ENCODE measurements at regions of chr3 and their contacts with region 1.

Region 1: GRCh38 chr3:18761530-18761929 is 336.4 kb upstream of the SATB1 start:
- DNase-seq: no peak
- H3K4me3 ChIP-seq: no peak overlapping the region
- H3K27ac ChIP-seq: no peak overlapping the region
- H3K4me1 ChIP-seq: peaks cover 7 to 13% of the 10 kb centered on the region in 2 donors
- H3K27me3 ChIP-seq: no peaks in the 10 kb centered on the region
- CTCF ChIP-seq: no peak
- POLR2A ChIP-seq: no peak

Region 2: DNA sequence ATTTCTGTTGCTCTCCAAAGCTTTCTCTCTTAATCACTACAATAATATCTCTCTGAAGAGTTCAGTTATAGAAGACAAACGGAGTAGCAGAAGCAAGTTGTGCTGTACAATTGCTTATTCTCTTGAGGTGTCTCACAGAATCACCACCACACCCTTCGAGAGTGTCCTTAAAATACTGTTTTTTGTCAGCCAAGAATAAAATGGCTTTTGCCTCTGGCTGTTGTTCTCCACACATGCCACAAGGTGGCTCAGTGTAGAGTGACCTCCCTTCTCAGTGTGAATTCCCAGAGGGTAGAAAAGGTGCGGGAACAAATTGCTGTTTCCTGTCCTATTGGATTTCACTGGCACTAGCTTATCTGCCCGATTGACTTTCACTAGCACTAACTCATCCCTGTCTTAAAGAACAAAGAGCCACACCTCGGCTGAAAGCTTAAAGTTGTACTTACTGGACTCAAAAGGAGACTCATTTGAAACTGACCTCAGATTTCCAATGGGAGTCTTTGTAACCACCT is 202.1 kb before region 1 on chr3:
- intact Hi-C with region 1: loop called (anchors 5 kb)
- DNase-seq: peak; percentile 25 to 45
- H3K4me3 ChIP-seq: no peak overlapping the region
- H3K27ac ChIP-seq: no peak overlapping the region
- H3K4me1 ChIP-seq: no peaks in the 10 kb centered on the region
- H3K27me3 ChIP-seq: no peaks in the 10 kb centered on the region
- CTCF ChIP-seq: peak; percentile 59 to 84 (median 80)
- POLR2A ChIP-seq: no peak

Measured in thyroid gland (tissue), 4 donors.